ENCODE measurements at regions of chr6 and their contacts with region 1.

Region 1: GRCh38 chr6:30821862-30822782 is 62.2 kb upstream of the DDR1 start:
- DNase-seq: no peak
- ATAC-seq: peak in 1 of 4 donors; percentile 44
- H3K4me3 ChIP-seq: no peak overlapping the region
- H3K27ac ChIP-seq: peak overlapping the region; percentile 16
- H3K4me1 ChIP-seq: peaks cover 20% of the 10 kb centered on the region
- H3K27me3 ChIP-seq: no peaks in the 10 kb centered on the region
- CTCF ChIP-seq: peak; percentile 44

Region 2: GRCh38 chr6:30748851-30749558 is 73.1 kb before region 1 on chr6:
- intact Hi-C with region 1: loop called (anchors 5 kb)
- DNase-seq: no peak
- ATAC-seq: no peak
- H3K4me3 ChIP-seq: no peak overlapping the region
- H3K27ac ChIP-seq: no peak overlapping the region
- H3K4me1 ChIP-seq: peaks cover 24% of the 10 kb centered on the region
- H3K27me3 ChIP-seq: no peaks in the 10 kb centered on the region
- CTCF ChIP-seq: no peak

Region 3: GRCh38 chr6:30769088-30769852 is 52.9 kb before region 1 on chr6:
- intact Hi-C with region 1: no loop called
- DNase-seq: peak; percentile 77 to 78
- ATAC-seq: peak; percentile 94 to 97 (median 96)
- H3K4me3 ChIP-seq: no peak overlapping the region
- H3K27ac ChIP-seq: peak overlapping the region; percentile 46
- H3K4me1 ChIP-seq: peaks cover 16% of the 10 kb centered on the region
- H3K27me3 ChIP-seq: no peaks in the 10 kb centered on the region
- CTCF ChIP-seq: no peak

Region 4: DNA sequence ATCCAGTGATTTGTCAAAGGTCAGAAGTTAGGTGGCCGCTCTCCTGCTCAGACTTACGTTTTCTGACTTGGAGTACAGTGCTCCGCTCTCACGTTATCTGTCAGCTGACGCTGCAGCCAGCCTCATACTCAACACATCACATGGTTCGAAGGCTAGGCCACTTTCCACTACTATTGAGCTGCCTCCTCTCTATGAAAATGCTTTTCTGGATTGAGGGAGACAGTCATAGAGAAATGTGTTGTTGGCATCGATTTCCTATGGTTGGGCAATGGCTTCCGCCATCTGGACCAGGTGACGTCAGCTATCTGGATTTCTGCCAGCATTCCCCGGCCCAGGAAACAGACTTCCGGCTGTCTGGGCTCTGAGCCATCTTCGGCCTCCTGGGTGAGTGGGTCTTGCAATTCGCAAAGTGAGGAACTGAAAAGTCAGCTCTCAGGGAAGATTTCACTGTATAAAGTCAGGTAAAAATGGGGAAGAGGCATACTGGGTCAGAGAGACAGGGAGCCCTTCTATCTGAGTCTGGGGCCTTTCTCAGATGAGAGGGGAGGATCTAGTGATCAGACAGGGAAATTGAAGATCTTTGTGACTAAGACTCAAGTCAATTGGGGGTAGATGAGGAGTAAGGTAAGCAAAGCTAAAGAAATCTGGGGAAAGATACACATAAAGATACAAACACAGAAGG is 40.2 kb before region 1 on chr6:
- intact Hi-C with region 1: loop called in 1 of 2 experiments (anchors 5 kb)
- DNase-seq: peak; percentile 95 to 97
- ATAC-seq: peak; percentile 86 to 92 (median 90)
- H3K4me3 ChIP-seq: peak overlapping the region; percentile 38
- H3K27ac ChIP-seq: peak overlapping the region; percentile 84
- H3K4me1 ChIP-seq: peaks cover 30% of the 10 kb centered on the region
- H3K27me3 ChIP-seq: no peaks in the 10 kb centered on the region
- CTCF ChIP-seq: no peak

Region 5: DNA sequence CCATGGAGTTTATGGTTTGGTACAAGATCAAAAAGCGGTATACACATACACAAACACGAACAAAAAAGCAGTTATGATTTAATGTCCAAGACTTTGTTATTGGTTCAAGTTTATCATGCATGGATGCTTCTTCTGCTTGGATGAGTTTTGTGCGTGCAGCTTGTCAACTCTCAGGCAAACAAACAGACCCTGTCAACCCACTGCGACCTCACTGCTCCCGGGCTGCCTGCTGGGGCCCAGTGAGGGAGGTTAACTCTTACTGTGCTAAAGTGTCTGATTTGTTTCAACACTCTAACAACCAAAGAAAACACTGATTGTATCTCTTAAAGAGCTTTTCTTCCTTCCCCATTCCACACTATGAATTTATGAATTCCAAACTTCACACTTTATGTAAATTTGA is 35.4 kb after region 1 on chr6:
- intact Hi-C with region 1: no loop called
- DNase-seq: no peak
- ATAC-seq: no peak
- H3K4me3 ChIP-seq: no peak overlapping the region
- H3K27ac ChIP-seq: no peak overlapping the region
- H3K4me1 ChIP-seq: peaks cover 6% of the 10 kb centered on the region
- H3K27me3 ChIP-seq: no peaks in the 10 kb centered on the region
- CTCF ChIP-seq: no peak

Region 6: GRCh38 chr6:31087494-31088089 is 265.5 kb after region 1 on chr6:
- intact Hi-C with region 1: loop called (anchors 5 kb)
- DNase-seq: peak; percentile 81 to 85
- ATAC-seq: peak; percentile 89 to 97 (median 94)
- H3K4me3 ChIP-seq: no peak overlapping the region
- H3K27ac ChIP-seq: peak overlapping the region; percentile 31
- H3K4me1 ChIP-seq: peaks cover 17% of the 10 kb centered on the region
- H3K27me3 ChIP-seq: no peaks in the 10 kb centered on the region
- CTCF ChIP-seq: peak; percentile 86

Region 7: DNA sequence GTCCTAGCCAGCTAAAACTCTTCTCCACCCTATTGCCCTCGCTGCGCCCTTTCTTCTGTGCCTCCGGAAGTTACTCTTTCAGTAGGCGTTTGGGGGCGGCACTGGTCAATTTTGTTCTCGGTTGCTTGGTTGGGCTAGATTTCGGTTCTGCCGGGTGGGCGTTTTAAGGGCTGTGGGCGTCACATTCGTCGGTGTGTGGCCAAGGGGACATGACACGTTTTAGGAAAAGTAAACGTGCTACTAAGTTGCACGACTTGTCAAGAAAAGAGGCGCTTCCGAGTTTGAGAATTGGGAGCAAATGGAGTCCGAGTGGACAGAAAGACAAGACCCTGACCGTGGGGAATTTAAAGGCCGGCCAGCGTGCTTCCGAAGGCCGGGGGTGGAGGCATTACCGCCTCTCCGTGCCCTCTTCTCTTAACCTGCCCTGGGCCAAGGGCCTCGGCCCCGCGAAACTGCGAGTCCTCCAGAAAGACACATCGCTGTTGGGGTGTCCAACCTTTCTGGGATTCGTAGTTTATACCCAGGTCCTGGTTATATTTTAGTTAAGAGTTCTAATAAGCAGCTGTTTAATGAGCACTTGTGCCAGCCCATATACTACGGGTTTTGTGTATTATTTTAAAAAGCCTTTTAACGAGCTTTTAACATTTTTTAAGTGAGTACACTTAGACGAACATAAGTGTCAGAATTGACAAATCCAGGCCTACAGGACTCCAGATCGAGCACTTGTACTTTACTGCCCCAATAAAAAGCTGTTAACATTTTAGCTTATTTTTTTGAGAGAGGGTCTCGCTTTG is 831.0 kb after region 1 on chr6:
- intact Hi-C with region 1: no loop called
- DNase-seq: peak; percentile 85 to 91
- ATAC-seq: peak; percentile 76 to 83 (median 79)
- H3K4me3 ChIP-seq: peak overlapping the region; percentile 72
- H3K27ac ChIP-seq: peak overlapping the region; percentile 98
- H3K4me1 ChIP-seq: peaks cover 21% of the 10 kb centered on the region
- H3K27me3 ChIP-seq: no peaks in the 10 kb centered on the region
- CTCF ChIP-seq: no peak

Measured in psoas muscle (tissue), 8 donors.